ENCODE measurements at regions of chr10 and their contacts with region 1.

Region 1: DNA sequence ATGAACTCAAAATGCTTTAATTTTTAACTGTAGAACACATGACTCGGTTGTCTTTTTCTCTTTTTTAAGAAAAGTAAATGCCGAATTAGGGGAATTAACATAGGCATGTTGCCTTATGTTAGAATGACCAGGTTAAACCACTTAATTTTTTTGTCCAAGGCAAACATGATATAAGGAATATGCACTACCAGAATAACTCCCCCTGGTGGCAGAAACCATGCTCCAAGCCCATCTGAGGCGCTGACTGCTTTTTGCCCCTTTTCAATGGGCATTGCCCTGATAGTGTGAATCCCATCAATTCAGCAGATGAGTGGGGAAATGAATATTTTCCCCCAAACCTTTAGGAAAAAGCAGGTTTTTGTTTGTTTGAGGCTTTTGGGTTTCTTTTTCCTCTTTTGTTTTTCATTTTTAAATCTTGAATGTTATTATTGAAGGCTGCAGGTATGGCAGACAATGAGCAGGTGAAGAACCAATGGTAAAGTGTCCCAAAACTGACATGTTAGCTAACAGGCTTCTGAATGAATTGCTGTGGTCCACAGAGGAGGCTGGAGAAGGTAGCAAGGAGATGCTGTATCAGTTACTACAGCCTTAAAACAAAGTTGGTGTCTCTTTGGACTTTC is 284.3 kb downstream of the SORCS3 start:
- DNase-seq: peak in 1 of 2 donors; percentile 8
- ATAC-seq: no peak
- H3K4me3 ChIP-seq: no peak overlapping the region
- H3K27ac ChIP-seq: no peak overlapping the region
- H3K4me1 ChIP-seq: no peaks in the 10 kb centered on the region
- H3K27me3 ChIP-seq: peaks cover 0 to 16% (median 0%) of the 10 kb centered on the region in 7 donors
- CTCF ChIP-seq: peak; percentile 31 to 67 (median 60)

Region 2: GRCh38 chr10:104406715-104407650 is 518.4 kb before region 1 on chr10:
- intact Hi-C with region 1: loop called in 2 of 10 experiments (anchors 10 kb)
- DNase-seq: no peak
- ATAC-seq: peak in 1 of 8 donors; percentile 51
- H3K4me3 ChIP-seq: no peak overlapping the region
- H3K27ac ChIP-seq: no peak overlapping the region
- H3K4me1 ChIP-seq: no peaks in the 10 kb centered on the region
- H3K27me3 ChIP-seq: no peaks in the 10 kb centered on the region
- CTCF ChIP-seq: peak in 7 of 9 donors; percentile 36 to 62 (median 47)

Region 3: DNA sequence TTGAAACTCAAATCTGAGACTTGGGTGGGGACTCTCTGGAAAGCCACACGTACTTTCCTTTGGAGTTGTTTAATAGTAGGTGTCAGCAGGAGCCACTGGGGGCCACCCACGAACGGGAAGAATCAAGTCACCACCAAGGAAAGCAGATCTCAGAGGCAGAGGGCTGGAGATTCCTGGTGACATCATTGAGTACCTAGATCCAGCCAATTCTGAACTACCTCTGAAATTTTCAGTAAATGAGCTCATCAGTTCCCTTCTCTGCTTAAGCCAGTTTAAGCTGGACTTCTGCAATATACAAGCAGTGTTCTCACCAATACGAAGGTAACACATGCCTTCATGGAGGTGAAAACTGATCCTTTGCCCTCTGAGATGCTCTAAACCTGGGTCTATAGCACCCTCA is 383.5 kb before region 1 on chr10:
- intact Hi-C with region 1: loop called in 1 of 10 experiments (anchors 2 kb)
- DNase-seq: no peak
- ATAC-seq: no peak
- H3K4me3 ChIP-seq: no peak overlapping the region
- H3K27ac ChIP-seq: no peak overlapping the region
- H3K4me1 ChIP-seq: no peaks in the 10 kb centered on the region
- H3K27me3 ChIP-seq: peaks cover 0 to 13% (median 0%) of the 10 kb centered on the region in 7 donors
- CTCF ChIP-seq: no peak

Region 4: GRCh38 chr10:104642658-104643302 is 282.6 kb before region 1 on chr10:
- intact Hi-C with region 1: loop called in 8 of 10 experiments (anchors 5 to 10 kb)
- DNase-seq: peak; percentile 14 to 39
- ATAC-seq: peak in 7 of 8 donors; percentile 33 to 66 (median 41)
- H3K4me3 ChIP-seq: peak overlapping the region in 3 of 10 donors; percentile 8 to 15 (median 12)
- H3K27ac ChIP-seq: no peak overlapping the region
- H3K4me1 ChIP-seq: peaks cover 0 to 23% (median 8%) of the 10 kb centered on the region in 9 donors
- H3K27me3 ChIP-seq: peaks cover 10 to 98% (median 84%) of the 10 kb centered on the region in 7 donors
- CTCF ChIP-seq: peak in 8 of 9 donors; percentile 18 to 50 (median 36)

Region 5: DNA sequence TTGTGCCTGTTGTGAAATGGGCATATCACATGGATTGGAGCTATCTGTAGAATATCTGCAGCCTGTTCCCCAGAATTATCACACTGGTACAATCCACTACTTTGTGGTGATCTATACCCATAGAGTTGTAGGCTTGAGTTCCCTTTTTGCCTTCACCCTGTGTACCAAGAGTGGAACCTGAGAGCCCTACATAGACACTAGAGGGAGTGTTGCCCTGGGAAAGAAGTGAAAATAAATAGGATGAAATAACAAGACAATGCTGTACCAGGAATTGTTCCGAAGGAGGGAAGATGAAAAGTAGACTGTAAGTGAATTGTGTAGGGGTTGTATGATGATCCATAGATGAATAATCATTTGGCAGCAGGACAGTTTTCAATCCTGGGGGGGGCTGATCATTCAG is 275.3 kb before region 1 on chr10:
- intact Hi-C with region 1: loop called in 8 of 10 experiments (anchors 1 to 10 kb)
- DNase-seq: no peak
- ATAC-seq: peak in 4 of 8 donors; percentile 33 to 62 (median 46)
- H3K4me3 ChIP-seq: no peak overlapping the region
- H3K27ac ChIP-seq: no peak overlapping the region
- H3K4me1 ChIP-seq: no peaks in the 10 kb centered on the region
- H3K27me3 ChIP-seq: peaks cover 0 to 45% (median 20%) of the 10 kb centered on the region in 7 donors
- CTCF ChIP-seq: peak in 8 of 9 donors; percentile 14 to 55 (median 45)